Activated CD8-positive, alpha-beta T cell treated with anti-CD3 and anti-CD28 coated beads, Interleukin-2, amount 10 ng/mL, durations not matched to agents 7 days and 5 days (primary cell): ENCODE measurements at regions of chr17 and their contacts with region 1.

Region 1: GRCh38 chr17:63611354-63611753 is 10.7 kb downstream of the TACO1 start:
- DNase-seq: peak; percentile 43
- ATAC-seq: peak; percentile 61
- H3K4me3 Mint-ChIP-seq: peak overlapping the region; percentile 38
- H3K27ac Mint-ChIP-seq: peak overlapping the region; percentile 86
- H3K4me1 Mint-ChIP-seq: peaks cover 28% of the 10 kb centered on the region
- H3K27me3 Mint-ChIP-seq: no peaks in the 10 kb centered on the region

Region 2: DNA sequence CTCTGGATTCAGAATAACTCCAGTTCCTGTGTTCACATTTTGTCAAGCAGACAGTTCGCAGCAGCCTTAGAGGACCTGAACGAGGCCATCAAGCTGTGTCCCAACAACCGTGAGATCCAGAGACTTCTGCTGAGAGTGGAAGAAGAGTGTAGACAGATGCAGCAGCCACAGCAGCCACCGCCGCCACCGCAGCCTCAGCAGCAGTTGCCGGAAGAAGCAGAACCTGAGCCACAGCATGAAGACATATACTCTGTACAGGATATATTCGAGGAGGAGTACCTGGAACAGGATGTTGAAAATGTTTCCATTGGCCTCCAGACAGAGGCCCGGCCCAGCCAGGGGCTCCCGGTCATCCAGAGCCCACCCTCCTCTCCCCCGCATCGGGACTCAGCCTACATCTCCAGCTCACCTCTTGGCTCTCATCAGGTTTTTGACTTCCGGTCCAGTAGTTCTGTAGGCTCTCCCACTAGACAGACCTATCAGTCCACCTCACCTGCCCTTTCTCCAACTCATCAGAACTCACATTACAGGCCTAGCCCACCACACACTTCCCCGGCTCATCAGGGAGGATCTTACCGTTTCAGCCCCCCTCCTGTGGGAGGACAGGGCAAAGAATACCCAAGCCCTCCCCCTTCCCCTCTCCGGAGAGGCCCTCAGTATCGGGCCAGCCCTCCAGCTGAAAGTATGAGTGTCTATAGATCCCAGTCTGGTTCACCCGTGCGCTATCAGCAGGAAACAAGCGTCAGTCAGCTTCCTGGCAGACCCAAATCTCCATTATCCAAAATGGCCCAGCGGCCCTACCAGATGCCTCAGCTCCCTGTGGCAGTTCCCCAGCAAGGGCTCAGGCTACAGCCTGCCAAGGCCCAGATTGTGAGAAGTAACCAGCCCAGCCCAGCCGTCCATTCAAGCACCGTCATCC is 191.1 kb before region 1 on chr17:
- CTCF ChIA-PET with region 1: interaction called, 177 read pairs
- POLR2A ChIA-PET with region 1: no interaction called
- DNase-seq: peak; percentile 82
- ATAC-seq: peak; percentile 93
- H3K4me3 Mint-ChIP-seq: peak overlapping the region; percentile 5
- H3K27ac Mint-ChIP-seq: peak overlapping the region; percentile 85
- H3K4me1 Mint-ChIP-seq: peaks cover 28% of the 10 kb centered on the region
- H3K27me3 Mint-ChIP-seq: peaks cover 5% of the 10 kb centered on the region

Region 3: GRCh38 chr17:63434876-63435684 is 176.3 kb before region 1 on chr17:
- CTCF ChIA-PET with region 1: interaction called, 177 read pairs
- POLR2A ChIA-PET with region 1: no interaction called
- DNase-seq: peak; percentile 81
- ATAC-seq: peak; percentile 83
- H3K4me3 Mint-ChIP-seq: peak overlapping the region; percentile 50
- H3K27ac Mint-ChIP-seq: peak overlapping the region; percentile 85
- H3K4me1 Mint-ChIP-seq: peaks cover 49% of the 10 kb centered on the region
- H3K27me3 Mint-ChIP-seq: no peaks in the 10 kb centered on the region

Region 4: DNA sequence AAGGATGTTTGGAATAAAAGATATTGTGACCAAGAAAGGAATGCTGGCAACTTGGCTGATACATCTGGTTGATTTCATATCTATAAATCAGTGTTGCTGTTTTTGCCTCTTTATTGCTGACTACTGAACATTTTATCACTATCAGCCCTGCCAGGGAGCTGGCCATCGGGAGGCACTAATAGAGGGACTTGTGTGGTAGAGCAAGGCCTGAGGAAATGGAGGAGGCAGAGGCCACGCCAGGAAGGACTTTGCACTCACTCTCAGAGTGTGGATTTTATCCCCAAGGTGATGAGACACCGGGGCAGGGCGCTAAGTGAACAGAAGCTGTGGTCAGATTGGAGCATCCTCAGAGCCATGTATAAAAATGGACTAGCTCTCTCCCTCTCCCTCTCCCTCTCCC is 155.9 kb before region 1 on chr17:
- CTCF ChIA-PET with region 1: no interaction called
- POLR2A ChIA-PET with region 1: no interaction called
- DNase-seq: no peak
- ATAC-seq: no peak
- H3K4me3 Mint-ChIP-seq: no peak overlapping the region
- H3K27ac Mint-ChIP-seq: no peak overlapping the region
- H3K4me1 Mint-ChIP-seq: peaks cover 4% of the 10 kb centered on the region
- H3K27me3 Mint-ChIP-seq: peaks cover 2% of the 10 kb centered on the region

Region 5: GRCh38 chr17:63478791-63479494 is 132.4 kb before region 1 on chr17:
- CTCF ChIA-PET with region 1: interaction called, 28 read pairs
- POLR2A ChIA-PET with region 1: no interaction called
- DNase-seq: peak; percentile 87
- ATAC-seq: peak; percentile 89
- H3K4me3 Mint-ChIP-seq: no peak overlapping the region
- H3K27ac Mint-ChIP-seq: no peak overlapping the region
- H3K4me1 Mint-ChIP-seq: peaks cover 16% of the 10 kb centered on the region
- H3K27me3 Mint-ChIP-seq: peaks cover 39% of the 10 kb centered on the region

Region 6: GRCh38 chr17:63600569-63601438 is 10.6 kb before region 1 on chr17 and contains the start of gene TACO1:
- CTCF ChIA-PET with region 1: interaction called, 42 read pairs
- POLR2A ChIA-PET with region 1: interaction called, 21 read pairs
- DNase-seq: peak; percentile 82
- ATAC-seq: peak; percentile 90
- H3K4me3 Mint-ChIP-seq: peak within 1 kb of the TSS; percentile 89
- H3K27ac Mint-ChIP-seq: peak within 1 kb of the TSS; percentile 91
- H3K4me1 Mint-ChIP-seq: peaks cover 33% of the 10 kb centered on the region
- H3K27me3 Mint-ChIP-seq: no peaks in the 10 kb centered on the region
- total RNA-seq, gene TACO1: 22.9 to 24.5 TPM

Region 7: GRCh38 chr17:63697341-63698286 is 86.3 kb after region 1 on chr17:
- CTCF ChIA-PET with region 1: interaction called, 11 read pairs
- POLR2A ChIA-PET with region 1: interaction called, 3 read pairs
- DNase-seq: peak; percentile 91
- ATAC-seq: peak; percentile 35
- H3K4me3 Mint-ChIP-seq: peak overlapping the region; percentile 96
- H3K27ac Mint-ChIP-seq: peak overlapping the region; percentile 98
- H3K4me1 Mint-ChIP-seq: peaks cover 59% of the 10 kb centered on the region
- H3K27me3 Mint-ChIP-seq: no peaks in the 10 kb centered on the region